Testis (tissue), 5 donors: ENCODE measurements at regions of chr20 and their contacts with region 1.

Region 1: GRCh38 chr20:20664795-20665589 is 47.5 kb downstream of the RALGAPA2 start:
- DNase-seq: peak; percentile 22
- H3K4me3 ChIP-seq: no peak overlapping the region
- H3K27ac ChIP-seq: no peak overlapping the region
- H3K4me1 ChIP-seq: peaks cover 13% of the 10 kb centered on the region
- H3K27me3 ChIP-seq: no peaks in the 10 kb centered on the region
- CTCF ChIP-seq: peak; percentile 19 to 39 (median 35)
- POLR2A ChIP-seq: no peak

Region 2: DNA sequence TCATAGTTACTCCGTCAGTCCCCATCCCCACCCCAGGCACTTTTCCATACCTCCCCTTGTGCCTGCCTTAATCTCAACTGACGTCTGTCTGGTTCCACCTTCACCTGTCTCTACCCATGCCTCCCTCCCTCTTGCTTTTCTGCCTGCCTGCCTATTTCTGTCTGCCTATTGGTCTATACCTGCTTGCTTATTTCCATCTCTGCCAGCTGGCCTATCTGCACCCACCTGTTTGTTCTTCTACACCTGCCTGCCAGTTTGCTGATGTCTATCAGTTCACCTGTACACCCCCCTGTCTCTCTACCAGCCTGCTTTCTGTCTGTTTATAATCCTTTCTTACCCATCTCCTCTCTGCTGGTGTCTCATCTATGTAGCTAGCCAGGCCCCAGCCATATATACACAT is 40.1 kb before region 1 on chr20:
- intact Hi-C with region 1: no loop called
- DNase-seq: no peak
- H3K4me3 ChIP-seq: no peak overlapping the region
- H3K27ac ChIP-seq: no peak overlapping the region
- H3K4me1 ChIP-seq: no peaks in the 10 kb centered on the region
- H3K27me3 ChIP-seq: no peaks in the 10 kb centered on the region
- CTCF ChIP-seq: no peak
- POLR2A ChIP-seq: no peak

Region 3: GRCh38 chr20:20824924-20825584 is 160.1 kb after region 1 on chr20:
- intact Hi-C with region 1: loop called (anchors 5 kb)
- DNase-seq: peak; percentile 65
- H3K4me3 ChIP-seq: no peak overlapping the region
- H3K27ac ChIP-seq: no peak overlapping the region
- H3K4me1 ChIP-seq: no peaks in the 10 kb centered on the region
- H3K27me3 ChIP-seq: no peaks in the 10 kb centered on the region
- CTCF ChIP-seq: peak; percentile 72 to 88 (median 87)
- POLR2A ChIP-seq: no peak